ENCODE measurements at regions of chr5 and their contacts with region 1.

Region 1: DNA sequence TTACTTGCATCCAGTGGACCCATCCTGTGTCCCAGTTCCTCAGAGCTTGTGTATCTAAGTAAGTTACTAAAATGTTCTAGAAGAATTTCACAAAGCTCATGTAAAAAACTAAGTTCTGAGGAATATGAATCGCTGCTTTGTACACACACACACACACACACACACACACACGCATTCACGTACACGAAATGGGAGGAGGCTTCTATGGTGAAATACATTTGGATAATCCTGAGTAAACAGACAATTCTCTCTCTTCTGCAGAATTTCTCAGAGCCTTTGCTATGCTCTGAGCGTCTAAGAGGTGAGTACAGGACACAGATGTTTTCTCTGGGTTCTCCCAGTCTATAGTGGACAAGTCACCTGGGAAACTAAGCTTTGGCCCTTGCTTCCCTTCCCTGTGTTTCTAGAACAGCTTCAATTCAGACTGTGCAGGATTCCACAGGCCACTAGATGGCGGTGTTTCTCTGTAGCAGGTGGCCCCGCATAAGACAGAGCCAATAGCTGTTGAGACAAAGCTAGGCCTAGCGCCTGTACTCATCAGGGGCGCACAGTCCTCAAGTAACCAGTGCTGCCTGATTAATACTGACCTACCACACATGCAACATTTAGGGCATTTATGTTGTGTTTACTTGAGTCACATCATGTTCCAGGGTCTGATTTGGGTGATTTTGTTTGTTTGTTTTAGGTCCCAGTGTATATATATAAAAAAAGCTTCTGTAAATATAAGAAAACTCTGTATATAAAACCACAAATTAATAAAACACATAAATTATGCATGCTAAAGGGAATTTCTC is 114.8 kb downstream of the LIFR start:
- DNase-seq: peak; percentile 33
- ATAC-seq: peak; percentile 100
- H3K4me3 ChIP-seq: no peak overlapping the region
- H3K27ac ChIP-seq: no peak overlapping the region
- H3K4me1 ChIP-seq: no peaks in the 10 kb centered on the region
- H3K27me3 ChIP-seq: peaks cover 0 to 2% of the 10 kb centered on the region in 2 experiments; a peak in 3 of 4 replicates
- CTCF ChIP-seq: peak; percentile 90 to 96 (median 92); a peak in 5 of 6 replicates
- EP300 ChIP-seq: no peak
- POLR2A ChIP-seq: no peak
- RAD21 ChIP-seq: peak; percentile 99

Region 2: DNA sequence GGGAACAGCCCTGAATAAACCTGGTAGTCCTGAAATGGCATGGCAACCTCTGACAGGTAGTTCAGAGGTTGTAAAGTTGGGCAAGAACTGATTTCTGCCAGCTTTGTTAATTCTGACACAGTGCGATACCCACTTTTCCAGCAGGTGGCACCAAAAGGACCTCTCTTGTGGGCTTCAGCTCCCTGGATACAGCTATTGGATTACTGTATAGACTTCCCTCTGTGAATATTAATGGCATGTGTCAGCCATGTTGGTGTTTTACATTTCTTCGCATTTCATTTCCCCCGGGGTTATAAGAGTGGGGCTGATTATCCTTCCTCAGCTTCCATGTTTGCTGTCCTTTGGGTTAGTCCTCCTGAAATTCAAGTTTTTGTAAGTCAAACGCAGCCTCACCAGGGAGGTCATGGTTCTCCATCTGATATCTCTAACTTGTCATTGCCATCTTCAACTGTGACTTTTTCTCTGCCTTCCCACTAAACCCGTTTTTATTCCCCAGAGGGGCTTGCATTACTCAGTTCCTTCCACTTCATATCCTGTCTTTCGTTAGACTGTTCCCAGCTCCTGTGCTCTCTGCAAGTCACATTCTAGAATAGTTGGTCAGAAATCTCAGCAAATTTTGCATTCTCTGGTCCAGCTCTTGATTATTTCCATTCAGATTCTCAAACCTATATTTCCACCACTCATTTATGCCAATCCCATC is 20.8 kb before region 1 on chr5:
- CTCF ChIA-PET with region 1: interaction called, 39 read pairs
- POLR2A ChIA-PET with region 1: no interaction called
- RAD21 ChIA-PET with region 1: interaction called, 8 read pairs
- SMC1A ChIA-PET with region 1: interaction called, 4 read pairs
- in situ Hi-C with region 1: no loop called
- intact Hi-C with region 1: no loop called
- DNase-seq: no peak
- ATAC-seq: peak; percentile 77
- H3K4me3 ChIP-seq: no peak overlapping the region
- H3K27ac ChIP-seq: no peak overlapping the region
- H3K4me1 ChIP-seq: no peaks in the 10 kb centered on the region
- H3K27me3 ChIP-seq: no peaks in the 10 kb centered on the region
- CTCF ChIP-seq: peak; percentile 59 to 68 (median 60)
- EP300 ChIP-seq: no peak
- POLR2A ChIP-seq: no peak
- RAD21 ChIP-seq: peak; percentile 42

Region 3: GRCh38 chr5:38463634-38464521 is 22.2 kb after region 1 on chr5:
- CTCF ChIA-PET with region 1: interaction called, 5 read pairs
- POLR2A ChIA-PET with region 1: interaction called, 3 read pairs
- RAD21 ChIA-PET with region 1: interaction called, 4 read pairs
- SMC1A ChIA-PET with region 1: interaction called, 10 read pairs
- in situ Hi-C with region 1: no loop called
- intact Hi-C with region 1: no loop called
- DNase-seq: no peak
- ATAC-seq: no peak
- H3K4me3 ChIP-seq: no peak overlapping the region
- H3K27ac ChIP-seq: no peak overlapping the region
- H3K4me1 ChIP-seq: no peaks in the 10 kb centered on the region
- H3K27me3 ChIP-seq: peaks cover 0 to 6% of the 10 kb centered on the region in 2 experiments; a peak in 1 of 4 replicates
- CTCF ChIP-seq: no peak
- EP300 ChIP-seq: no peak
- POLR2A ChIP-seq: no peak
- RAD21 ChIP-seq: no peak

Region 4: DNA sequence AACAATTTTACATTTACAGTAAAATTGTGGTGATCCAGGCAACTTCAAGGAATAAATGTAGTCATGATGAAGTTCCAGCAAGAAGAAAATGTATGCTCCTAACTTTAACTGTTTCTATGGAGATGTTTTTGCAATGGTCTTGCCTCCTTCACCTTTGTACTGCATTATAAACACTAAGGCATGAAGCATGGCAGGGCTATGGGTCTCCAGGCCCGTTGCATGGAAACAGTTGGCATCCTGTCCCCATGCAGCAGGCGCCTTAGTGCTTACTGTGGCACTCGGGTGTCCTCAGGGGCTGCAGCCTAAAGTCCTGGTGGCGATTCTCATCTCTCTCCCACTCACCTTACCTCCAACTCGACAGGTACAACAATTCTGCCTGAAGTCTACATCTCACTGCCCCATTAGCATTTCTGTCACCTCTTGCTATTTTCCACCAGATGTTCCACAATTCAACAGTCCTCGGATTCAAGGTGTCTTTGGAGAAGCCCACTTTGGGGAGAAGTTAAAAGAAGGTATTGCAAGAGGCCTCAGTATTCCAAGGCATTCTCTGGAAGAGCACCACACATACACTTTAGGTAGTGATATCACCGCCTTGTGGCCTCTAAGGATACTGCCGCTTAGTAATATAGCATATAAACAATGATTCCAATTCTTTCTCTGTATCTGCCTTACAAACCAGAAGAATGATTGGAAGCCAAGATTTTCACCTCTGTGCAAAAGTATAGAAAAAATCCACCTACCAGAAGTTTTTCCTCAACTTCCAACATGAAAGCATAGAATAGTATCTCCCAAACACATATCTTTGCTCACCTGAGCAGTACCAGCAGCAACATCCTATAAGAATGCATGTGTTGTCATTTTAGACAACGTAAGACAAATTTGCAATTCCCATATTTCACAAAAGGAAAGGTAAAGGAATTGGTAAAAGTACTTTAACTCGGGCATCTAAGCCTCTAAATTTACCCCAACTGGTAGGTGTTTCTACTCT is 109.7 kb after region 1 on chr5:
- CTCF ChIA-PET with region 1: interaction called, 22 read pairs
- POLR2A ChIA-PET with region 1: no interaction called
- RAD21 ChIA-PET with region 1: interaction called, 12 read pairs
- SMC1A ChIA-PET with region 1: interaction called, 16 read pairs
- in situ Hi-C with region 1: no loop called
- intact Hi-C with region 1: loop called (anchors 1 kb)
- DNase-seq: no peak
- ATAC-seq: peak; percentile 58
- H3K4me3 ChIP-seq: no peak overlapping the region
- H3K27ac ChIP-seq: no peak overlapping the region
- H3K4me1 ChIP-seq: no peaks in the 10 kb centered on the region
- H3K27me3 ChIP-seq: peaks cover 3 to 11% of the 10 kb centered on the region in 2 experiments; a peak in 2 of 4 replicates
- CTCF ChIP-seq: peak; percentile 42 to 56 (median 54); a peak in 4 of 6 replicates
- EP300 ChIP-seq: no peak
- POLR2A ChIP-seq: no peak
- RAD21 ChIP-seq: peak; percentile 35; the same call in 1 of the 2 replicates

Region 5: DNA sequence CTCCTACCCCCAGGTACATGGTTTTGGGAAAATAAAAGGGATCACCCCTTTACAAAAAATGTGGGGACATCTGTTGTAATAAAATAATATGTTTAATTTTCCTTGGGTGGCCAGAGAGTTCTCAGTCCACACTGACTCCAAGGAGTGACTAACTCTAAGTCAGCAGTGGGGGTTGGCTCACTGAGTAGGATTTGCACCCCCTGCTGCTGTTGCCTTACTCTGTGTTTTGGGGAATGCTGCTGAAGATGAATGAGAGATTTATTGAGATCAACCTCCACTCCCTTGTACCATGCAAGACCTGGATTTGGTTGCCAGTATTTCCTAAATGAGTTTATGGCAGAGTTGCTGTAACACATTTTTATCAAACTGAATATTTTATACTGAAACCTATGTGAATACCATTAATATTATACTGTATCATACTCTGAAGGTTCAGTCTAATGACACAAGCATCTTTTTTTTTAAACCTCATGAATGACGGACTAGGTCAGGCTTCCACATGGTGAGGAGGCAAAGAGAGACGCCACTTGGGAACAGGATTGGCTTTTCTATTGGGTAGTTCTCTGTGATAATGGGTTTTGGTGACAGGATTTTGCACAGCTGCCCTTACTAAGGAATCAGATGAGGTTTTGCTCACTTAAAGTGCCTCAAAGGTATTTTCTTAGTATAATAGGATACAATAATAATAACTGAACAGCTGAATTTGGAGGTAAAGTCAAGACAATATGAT is 282.8 kb after region 1 on chr5:
- CTCF ChIA-PET with region 1: interaction called, 18 read pairs
- POLR2A ChIA-PET with region 1: no interaction called
- RAD21 ChIA-PET with region 1: no interaction called
- SMC1A ChIA-PET with region 1: interaction called, 5 read pairs
- in situ Hi-C with region 1: no loop called
- intact Hi-C with region 1: no loop called
- DNase-seq: no peak
- ATAC-seq: no peak
- H3K4me3 ChIP-seq: no peak overlapping the region
- H3K27ac ChIP-seq: no peak overlapping the region
- H3K4me1 ChIP-seq: no peaks in the 10 kb centered on the region
- H3K27me3 ChIP-seq: no peaks in the 10 kb centered on the region
- CTCF ChIP-seq: no peak
- EP300 ChIP-seq: no peak
- POLR2A ChIP-seq: no peak
- RAD21 ChIP-seq: no peak

Region 6: GRCh38 chr5:38816083-38817030 is 374.7 kb after region 1 on chr5:
- CTCF ChIA-PET with region 1: interaction called, 158 read pairs
- POLR2A ChIA-PET with region 1: no interaction called
- RAD21 ChIA-PET with region 1: interaction called, 118 read pairs
- SMC1A ChIA-PET with region 1: interaction called, 81 read pairs
- in situ Hi-C with region 1: no loop called
- intact Hi-C with region 1: no loop called
- DNase-seq: no peak
- ATAC-seq: no peak
- H3K4me3 ChIP-seq: no peak overlapping the region
- H3K27ac ChIP-seq: no peak overlapping the region
- H3K4me1 ChIP-seq: no peaks in the 10 kb centered on the region
- H3K27me3 ChIP-seq: no peaks in the 10 kb centered on the region
- CTCF ChIP-seq: no peak
- EP300 ChIP-seq: no peak
- POLR2A ChIP-seq: no peak
- RAD21 ChIP-seq: no peak